AG04449 (cell line): ENCODE measurements at regions of chr2 and their contacts with region 1.

Region 1: GRCh38 chr2:55050133-55050994 is at the start of gene RTN4:
- DNase-seq: peak; percentile 95
- H3K4me3 ChIP-seq: peak within 1 kb of the TSS; percentile 92
- CTCF ChIP-seq: peak; percentile 25

Region 2: DNA sequence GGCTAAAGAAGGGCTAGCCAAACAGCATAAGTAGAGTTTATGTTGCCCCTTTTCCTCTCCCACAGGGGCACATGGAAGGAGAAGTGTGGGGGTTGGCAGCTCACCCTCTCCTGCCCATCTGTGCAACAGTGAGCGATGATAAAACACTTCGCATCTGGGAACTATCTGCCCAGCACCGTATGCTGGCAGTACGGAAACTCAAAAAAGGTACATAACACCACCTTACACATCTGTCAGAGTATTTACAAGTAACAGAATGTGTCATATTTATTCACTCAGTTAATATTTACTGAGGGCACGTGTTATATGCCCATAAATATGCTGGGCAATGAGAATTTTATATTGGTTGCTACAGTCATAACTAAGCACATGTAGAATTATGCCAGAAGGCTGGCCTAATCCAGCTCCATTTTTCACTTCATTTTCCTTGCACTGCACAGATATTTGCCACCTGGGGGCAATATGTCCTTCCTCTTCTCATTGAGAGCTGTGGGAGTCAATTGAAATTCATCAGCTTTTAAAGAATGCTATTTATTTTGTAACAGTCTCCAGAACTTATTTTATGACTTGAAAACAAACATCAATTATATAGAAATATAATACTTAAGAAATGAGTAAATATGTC is 150.7 kb before region 1 on chr2:
- CTCF ChIA-PET with region 1: interaction called, 19 read pairs
- POLR2A ChIA-PET with region 1: interaction called, 3 read pairs
- DNase-seq: no peak
- H3K4me3 ChIP-seq: no peak overlapping the region
- CTCF ChIP-seq: peak; percentile 52

Region 3: DNA sequence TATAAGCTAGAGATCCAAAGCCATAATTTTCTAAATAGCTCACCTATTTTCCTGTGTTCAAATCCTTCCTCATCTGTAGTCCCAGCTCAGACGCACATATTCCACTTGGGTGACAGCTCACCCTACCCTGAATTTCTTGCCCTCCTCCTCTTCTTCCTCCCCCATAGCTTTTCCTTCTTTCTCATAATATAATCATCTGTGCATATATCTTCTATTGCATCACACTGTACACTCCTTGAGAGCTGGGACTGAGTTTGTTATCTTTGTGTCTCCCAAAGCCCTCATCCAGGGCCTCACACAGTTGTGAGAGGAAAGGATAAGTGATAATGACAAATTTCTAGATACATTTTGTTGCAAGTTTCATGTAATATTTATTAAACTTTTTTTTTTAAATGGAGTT is 55.8 kb after region 1 on chr2:
- CTCF ChIA-PET with region 1: interaction called, 12 read pairs
- POLR2A ChIA-PET with region 1: interaction called, 14 read pairs
- DNase-seq: no peak
- H3K4me3 ChIP-seq: no peak overlapping the region
- CTCF ChIP-seq: no peak

Region 4: GRCh38 chr2:55120634-55121359 is 70.4 kb after region 1 on chr2:
- CTCF ChIA-PET with region 1: interaction called, 12 read pairs
- POLR2A ChIA-PET with region 1: interaction called, 31 read pairs
- DNase-seq: no peak
- H3K4me3 ChIP-seq: no peak overlapping the region
- CTCF ChIP-seq: no peak

Region 5: DNA sequence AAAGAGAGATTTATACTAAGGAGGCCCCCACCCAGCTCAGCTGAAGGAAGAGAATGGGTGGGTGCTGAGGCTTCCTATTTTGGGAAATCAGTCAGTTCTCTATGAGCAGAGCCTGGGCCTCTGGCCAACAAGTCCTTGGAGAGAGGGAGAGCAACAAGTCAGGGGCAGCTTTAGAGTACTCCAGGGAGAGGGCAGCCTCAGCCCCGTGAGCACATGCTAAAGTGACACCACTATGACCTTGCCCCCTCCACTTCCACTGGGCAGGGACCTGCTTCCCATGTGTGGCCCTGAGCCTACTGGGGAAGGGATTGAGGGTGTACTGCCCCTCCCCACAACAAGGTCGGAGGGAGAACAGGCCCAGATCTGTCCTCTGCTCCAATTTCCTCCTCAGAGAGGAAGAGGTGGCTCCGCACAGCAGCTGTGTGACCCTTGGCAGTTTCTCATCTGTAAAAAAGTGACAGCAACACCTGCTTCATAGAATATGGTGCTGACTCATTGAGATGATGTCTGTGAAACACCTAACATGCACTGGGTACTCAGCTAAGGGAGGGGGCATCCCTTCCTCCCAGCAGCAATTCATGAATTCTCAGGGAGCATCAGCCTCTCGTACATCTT is 108.8 kb after region 1 on chr2:
- CTCF ChIA-PET with region 1: interaction called, 13 read pairs
- POLR2A ChIA-PET with region 1: interaction called, 84 read pairs
- DNase-seq: no peak
- H3K4me3 ChIP-seq: no peak overlapping the region
- CTCF ChIP-seq: no peak